ENCODE measurements at regions of chr15 and their contacts with region 1.

Region 1: DNA sequence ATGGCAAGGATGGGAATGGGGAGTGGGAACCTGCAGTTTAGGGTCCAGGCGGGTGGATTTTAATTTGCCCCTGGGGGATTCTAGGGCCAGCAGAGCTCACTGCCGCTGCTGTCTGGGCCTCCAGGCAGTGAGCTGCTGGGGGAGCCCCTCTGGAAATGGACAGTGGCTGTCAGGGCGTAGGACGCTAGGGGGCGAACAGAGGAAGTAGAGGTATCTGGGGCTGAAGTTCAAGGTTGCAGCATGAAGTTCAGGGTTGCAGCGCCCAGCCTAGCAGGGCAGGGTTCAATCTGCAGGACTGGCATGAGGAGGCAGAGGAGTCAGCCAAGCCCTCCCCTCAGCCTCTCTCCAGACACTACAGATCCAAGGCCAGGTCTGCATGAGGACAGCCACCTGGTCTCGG is 49.6 kb downstream of the APBA2 start:
- DNase-seq: no peak
- H3K4me3 ChIP-seq: no peak overlapping the region
- H3K27ac ChIP-seq: no peak overlapping the region
- H3K4me1 ChIP-seq: peaks cover 4% of the 10 kb centered on the region
- H3K27me3 ChIP-seq: no peaks in the 10 kb centered on the region
- CTCF ChIP-seq: no peak
- EP300 ChIP-seq: no peak
- POLR2A ChIP-seq: no peak

Region 2: GRCh38 chr15:28994831-28995596 is 59.7 kb after region 1 on chr15:
- intact Hi-C with region 1: loop called in 1 of 4 experiments (anchors 10 kb)
- DNase-seq: no peak
- H3K4me3 ChIP-seq: no peak overlapping the region
- H3K27ac ChIP-seq: no peak overlapping the region
- H3K4me1 ChIP-seq: peaks cover 12% of the 10 kb centered on the region
- H3K27me3 ChIP-seq: no peaks in the 10 kb centered on the region
- CTCF ChIP-seq: no peak
- EP300 ChIP-seq: no peak
- POLR2A ChIP-seq: no peak

Measured in ovary (tissue), 10 donors.